CD14-positive monocyte (primary cell): ENCODE measurements at regions of chr5 and their contacts with region 1.

Region 1: DNA sequence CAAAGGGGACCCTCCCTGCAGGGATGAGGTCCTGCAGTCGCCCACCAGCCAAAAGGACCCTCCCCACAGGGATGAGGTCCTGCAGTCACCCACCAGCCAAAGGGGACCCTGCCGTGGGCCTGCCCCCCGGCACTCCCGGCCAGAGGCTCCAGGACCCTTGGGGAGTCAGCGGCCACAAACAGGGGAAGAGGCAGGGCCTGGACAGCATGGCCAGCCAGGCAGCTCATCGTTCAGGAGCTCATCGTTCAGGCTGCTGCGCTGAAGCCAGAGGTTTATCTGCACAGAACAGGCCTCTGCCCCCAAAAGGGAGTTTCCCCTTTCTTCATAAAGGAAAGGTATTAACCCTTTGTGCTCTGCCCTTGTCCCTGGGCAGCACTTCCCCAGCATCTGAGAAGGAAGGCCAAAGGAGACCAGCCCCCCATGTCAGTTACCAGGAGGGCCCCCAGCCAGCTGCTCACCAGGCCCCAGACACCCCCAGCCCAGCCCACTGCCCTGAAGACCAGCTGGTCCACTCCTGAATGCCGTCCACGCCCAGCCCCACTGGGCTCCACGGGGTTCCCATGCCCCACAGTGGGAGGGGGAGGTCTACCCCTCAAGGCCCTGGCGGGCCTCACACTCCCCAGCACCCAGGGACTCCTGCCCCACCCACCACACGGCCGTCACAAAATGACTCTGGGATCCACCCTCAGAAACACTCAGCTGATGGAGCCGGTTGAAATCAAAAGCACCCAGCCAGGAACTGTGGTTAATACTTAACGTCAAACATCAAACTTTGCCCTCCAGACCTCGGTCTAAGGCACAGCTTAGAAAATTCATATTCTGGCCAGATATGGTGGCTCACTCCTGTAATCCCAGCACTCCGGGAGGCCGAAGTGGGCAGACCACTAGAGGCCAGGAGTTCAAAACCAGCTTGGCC is 6.3 kb downstream of the SLC12A7 start:
- DNase-seq: peak; percentile 23 to 42 (median 33)
- H3K4me3 ChIP-seq: peak overlapping the region in 2 of 3 experiments; percentile 32 to 41
- H3K4me3 Mint-ChIP-seq: peak overlapping the region; percentile 67 to 69
- H3K27ac ChIP-seq: no peak overlapping the region
- H3K27ac Mint-ChIP-seq: peak overlapping the region; percentile 25 to 97 (median 95)
- H3K4me1 ChIP-seq: peaks cover 73 to 74% of the 10 kb centered on the region in 2 donors
- H3K4me1 Mint-ChIP-seq: peaks cover 84% of the 10 kb centered on the region
- H3K27me3 ChIP-seq: peaks cover 0 to 5% of the 10 kb centered on the region in 2 donors
- H3K27me3 Mint-ChIP-seq: peaks cover 0 to 12% (median 6%) of the 10 kb centered on the region in 3 donors
- CTCF ChIP-seq: no peak

Region 2: DNA sequence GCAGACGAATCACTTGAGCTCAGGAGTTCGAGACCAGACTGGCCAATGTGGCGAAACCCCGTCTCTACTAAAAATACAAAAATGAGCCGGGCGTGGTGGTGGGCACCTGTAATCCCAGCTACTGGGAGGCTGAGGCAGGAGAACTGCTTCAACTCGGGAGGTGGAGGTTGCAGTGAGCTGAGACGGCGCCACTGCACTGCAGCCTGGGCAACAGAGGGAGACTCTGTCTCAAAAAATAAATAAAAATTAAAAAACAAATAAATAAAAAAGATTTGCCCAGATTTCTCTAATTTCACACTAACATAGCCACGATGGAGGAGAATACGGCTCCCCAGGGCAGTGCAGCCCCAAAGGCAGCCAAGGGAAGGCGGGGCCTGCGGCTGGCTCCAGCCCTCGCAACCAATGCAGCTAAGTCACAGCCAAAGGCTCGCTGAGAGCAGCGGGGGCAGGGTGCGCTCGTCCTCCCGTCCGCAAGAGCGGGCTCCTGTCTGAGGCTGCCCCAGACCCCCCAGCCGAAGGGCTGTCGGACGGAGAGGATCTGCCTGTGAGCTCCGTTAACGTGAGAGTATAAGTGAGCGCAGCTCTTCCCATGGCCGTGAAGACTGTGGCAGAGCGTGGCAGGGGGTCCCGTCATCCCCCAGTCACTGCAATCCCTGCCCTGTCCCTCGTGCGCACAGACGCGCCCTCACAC is 37.3 kb before region 1 on chr5:
- intact Hi-C with region 1: no loop called
- DNase-seq: no peak
- H3K4me3 ChIP-seq: no peak overlapping the region
- H3K4me3 Mint-ChIP-seq: no peak overlapping the region
- H3K27ac ChIP-seq: no peak overlapping the region
- H3K27ac Mint-ChIP-seq: no peak overlapping the region
- H3K4me1 ChIP-seq: no peaks in the 10 kb centered on the region
- H3K4me1 Mint-ChIP-seq: no peaks in the 10 kb centered on the region
- H3K27me3 ChIP-seq: no peaks in the 10 kb centered on the region
- H3K27me3 Mint-ChIP-seq: no peaks in the 10 kb centered on the region
- CTCF ChIP-seq: no peak

Region 3: GRCh38 chr5:1344975-1345838 is 239.6 kb after region 1 on chr5 and contains the start of gene CLPTM1L:
- intact Hi-C with region 1: loop called in 1 of 2 experiments (anchors 10 kb)
- DNase-seq: peak; percentile 87 to 88 (median 87)
- H3K4me3 ChIP-seq: peak within 1 kb of the TSS; percentile 87 to 97 (median 93)
- H3K4me3 Mint-ChIP-seq: peak within 1 kb of the TSS; percentile 85 to 90
- H3K27ac ChIP-seq: peak within 1 kb of the TSS; percentile 58 to 95
- H3K27ac Mint-ChIP-seq: peak within 1 kb of the TSS; percentile 19 to 84 (median 63)
- H3K4me1 ChIP-seq: peaks cover 16 to 30% of the 10 kb centered on the region in 2 donors
- H3K4me1 Mint-ChIP-seq: peaks cover 26% of the 10 kb centered on the region
- H3K27me3 ChIP-seq: no peaks in the 10 kb centered on the region
- H3K27me3 Mint-ChIP-seq: peaks cover 0 to 2% (median 0%) of the 10 kb centered on the region in 3 donors
- CTCF ChIP-seq: no peak
- polyA plus RNA-seq, gene CLPTM1L: 14.1 to 76.2 (median 35.0) TPM